Right ventricle myocardium superior (tissue), 1 donor: ENCODE measurements at regions of chr18 and their contacts with region 1.

Region 1: GRCh38 chr18:58792086-58792485 is 72.6 kb upstream of the ZNF532 start:
- DNase-seq: no peak
- ATAC-seq: no peak

Region 2: GRCh38 chr18:58525517-58525916 is 266.6 kb before region 1 on chr18:
- intact Hi-C with region 1: no loop called
- DNase-seq: no peak
- ATAC-seq: no peak

Region 3: DNA sequence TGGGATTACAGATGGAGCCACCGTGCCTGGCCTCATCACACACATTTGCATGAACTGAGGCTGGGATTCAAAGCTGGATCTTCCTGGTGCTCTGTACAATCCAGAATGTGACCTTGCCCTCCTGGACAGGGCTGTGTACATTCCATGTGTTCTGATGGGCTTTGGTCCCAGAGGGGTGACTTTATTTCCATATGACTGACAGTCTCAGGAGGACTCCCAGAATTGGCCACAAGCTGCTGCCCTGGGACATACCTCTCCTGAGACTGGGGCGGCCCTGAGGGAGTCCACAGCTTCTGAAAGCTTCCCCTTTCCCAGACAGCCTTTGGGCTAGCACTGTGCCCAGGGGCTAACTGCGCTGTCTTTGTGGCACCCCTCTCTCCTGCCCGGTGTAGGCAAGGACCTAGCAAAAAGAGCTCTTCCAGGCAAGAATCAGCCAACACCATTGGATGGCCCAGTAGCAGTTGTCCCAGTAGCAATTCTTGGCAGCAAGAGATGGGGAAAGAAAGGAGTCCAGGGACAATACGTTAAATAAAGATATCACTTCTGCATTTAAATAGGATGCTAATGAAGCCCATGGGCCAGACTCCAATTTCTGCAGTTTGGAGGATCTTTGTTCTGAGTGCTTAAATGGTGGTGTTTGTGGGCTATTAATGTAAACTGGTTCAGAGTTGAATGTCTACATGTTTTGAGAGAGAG is 46.2 kb after region 1 on chr18:
- intact Hi-C with region 1: loop called (anchors 5 kb)
- DNase-seq: no peak
- ATAC-seq: peak; percentile 46